ENCODE measurements at regions of chr2 and their contacts with region 1.

Region 1: DNA sequence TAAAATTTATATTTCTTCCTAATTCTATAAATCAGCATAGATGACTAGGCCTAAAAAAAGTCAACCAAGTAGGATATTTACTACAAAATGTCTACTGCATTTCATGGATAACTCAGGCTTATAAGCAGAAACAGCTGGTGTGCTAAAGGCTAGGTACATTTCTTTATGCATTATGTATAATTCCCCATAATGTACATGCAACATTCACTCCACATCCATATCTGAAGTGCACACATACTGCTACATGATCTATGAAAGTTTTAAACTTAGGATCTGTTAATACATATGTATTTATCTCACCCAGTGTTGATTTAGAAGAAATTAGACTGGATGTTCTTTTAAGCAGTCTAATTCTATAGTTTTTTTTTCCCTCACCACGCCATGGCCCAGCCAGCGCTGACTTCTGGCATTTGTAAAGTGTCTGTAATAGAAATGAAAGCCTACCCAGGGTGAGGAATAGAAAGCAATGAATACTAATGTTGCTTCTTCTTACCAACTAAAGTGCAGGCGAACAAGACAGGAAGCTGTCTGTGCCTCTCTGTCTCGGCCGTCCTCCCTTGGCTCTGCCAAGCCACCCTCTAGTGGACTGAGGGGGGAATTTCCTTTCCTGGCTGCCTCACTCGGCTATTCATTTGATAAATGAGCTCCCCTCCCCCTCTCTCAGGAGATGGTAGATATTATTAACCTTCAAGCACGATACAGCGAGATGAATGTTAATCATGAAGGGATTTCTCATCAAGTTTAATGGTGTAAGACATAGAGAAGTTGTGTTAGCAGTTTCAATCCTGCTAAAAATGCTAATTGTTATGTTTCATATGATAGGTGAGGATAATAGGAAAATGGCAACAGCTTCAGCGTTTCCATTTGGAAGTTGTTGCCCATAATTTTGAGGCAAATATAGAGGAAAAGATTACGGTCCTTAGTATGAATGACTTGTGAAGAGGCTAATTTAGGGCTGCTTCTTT is 384.5 kb downstream of the MTX2 start:
- DNase-seq: peak; percentile 81
- H3K4me3 Mint-ChIP-seq: no peak overlapping the region
- H3K27ac Mint-ChIP-seq: no peak overlapping the region
- H3K4me1 Mint-ChIP-seq: peaks cover 5% of the 10 kb centered on the region
- H3K27me3 Mint-ChIP-seq: peaks cover 29% of the 10 kb centered on the region
- CTCF ChIP-seq: peak; percentile 73

Region 2: DNA sequence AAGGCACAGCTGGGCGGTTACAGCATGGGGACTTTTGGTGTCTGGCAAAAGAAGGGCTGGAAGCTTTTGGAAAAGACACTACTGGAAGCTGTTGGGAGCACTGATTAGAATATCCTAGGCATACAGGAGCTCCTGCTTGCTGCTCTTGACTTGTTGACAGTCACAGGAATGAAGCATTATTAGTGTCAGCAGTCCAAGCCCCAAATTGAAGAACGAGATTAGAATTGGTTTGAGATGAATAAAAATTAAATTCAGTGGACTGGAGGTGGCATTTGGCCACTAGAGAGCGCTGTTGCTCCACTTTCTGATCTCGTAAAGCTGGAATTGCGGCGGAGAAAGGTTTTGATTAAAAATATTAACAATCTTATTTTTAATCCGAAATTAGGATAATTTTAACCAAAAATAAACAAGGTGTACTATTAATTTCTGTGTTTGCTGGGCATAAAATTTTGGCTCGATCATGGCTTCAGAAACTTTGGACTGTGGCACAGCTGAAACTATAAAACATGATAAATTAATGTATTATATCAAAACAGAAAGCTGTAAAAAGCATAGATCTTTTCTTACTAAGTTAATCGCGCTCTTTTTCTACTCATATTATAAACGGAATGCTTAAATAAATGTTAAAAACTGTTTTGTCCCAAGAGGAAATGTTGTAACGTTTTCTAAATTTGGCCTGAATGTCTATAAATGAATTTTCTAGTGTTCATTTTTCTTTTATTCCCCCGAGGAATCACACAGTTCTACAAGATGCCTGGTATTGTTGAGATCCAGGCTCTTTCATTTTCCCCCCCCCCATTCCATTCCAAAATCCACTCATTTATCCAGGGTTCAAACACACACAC is 526.6 kb before region 1 on chr2:
- CTCF ChIA-PET with region 1: interaction called, 100 read pairs
- POLR2A ChIA-PET with region 1: interaction called, 13 read pairs
- intact Hi-C with region 1: loop called (anchors 1 kb)
- DNase-seq: peak; percentile 63
- H3K4me3 Mint-ChIP-seq: no peak overlapping the region
- H3K27ac Mint-ChIP-seq: no peak overlapping the region
- H3K4me1 Mint-ChIP-seq: no peaks in the 10 kb centered on the region
- H3K27me3 Mint-ChIP-seq: peaks cover 11% of the 10 kb centered on the region
- CTCF ChIP-seq: peak; percentile 76

Region 3: GRCh38 chr2:176140513-176141317 is 513.0 kb before region 1 on chr2:
- CTCF ChIA-PET with region 1: interaction called, 84 read pairs
- POLR2A ChIA-PET with region 1: interaction called, 3 read pairs
- intact Hi-C with region 1: loop called (anchors 1 kb)
- DNase-seq: peak; percentile 73
- H3K4me3 Mint-ChIP-seq: peak overlapping the region; percentile 57
- H3K27ac Mint-ChIP-seq: no peak overlapping the region
- H3K4me1 Mint-ChIP-seq: no peaks in the 10 kb centered on the region
- H3K27me3 Mint-ChIP-seq: no peaks in the 10 kb centered on the region
- CTCF ChIP-seq: peak; percentile 96

Region 4: GRCh38 chr2:176638167-176639015 is 15.4 kb before region 1 on chr2:
- CTCF ChIA-PET with region 1: interaction called, 53 read pairs
- POLR2A ChIA-PET with region 1: interaction called, 5 read pairs
- intact Hi-C with region 1: no loop called
- DNase-seq: peak; percentile 61
- H3K4me3 Mint-ChIP-seq: peak overlapping the region; percentile 74
- H3K27ac Mint-ChIP-seq: no peak overlapping the region
- H3K4me1 Mint-ChIP-seq: peaks cover 6% of the 10 kb centered on the region
- H3K27me3 Mint-ChIP-seq: no peaks in the 10 kb centered on the region
- CTCF ChIP-seq: peak; percentile 85

Region 5: GRCh38 chr2:176664478-176664877 is 10.7 kb after region 1 on chr2:
- CTCF ChIA-PET with region 1: interaction called, 38 read pairs
- POLR2A ChIA-PET with region 1: interaction called, 5 read pairs
- intact Hi-C with region 1: no loop called
- DNase-seq: no peak
- H3K4me3 Mint-ChIP-seq: no peak overlapping the region
- H3K27ac Mint-ChIP-seq: no peak overlapping the region
- H3K4me1 Mint-ChIP-seq: peaks cover 5% of the 10 kb centered on the region
- H3K27me3 Mint-ChIP-seq: no peaks in the 10 kb centered on the region
- CTCF ChIP-seq: no peak

Region 6: DNA sequence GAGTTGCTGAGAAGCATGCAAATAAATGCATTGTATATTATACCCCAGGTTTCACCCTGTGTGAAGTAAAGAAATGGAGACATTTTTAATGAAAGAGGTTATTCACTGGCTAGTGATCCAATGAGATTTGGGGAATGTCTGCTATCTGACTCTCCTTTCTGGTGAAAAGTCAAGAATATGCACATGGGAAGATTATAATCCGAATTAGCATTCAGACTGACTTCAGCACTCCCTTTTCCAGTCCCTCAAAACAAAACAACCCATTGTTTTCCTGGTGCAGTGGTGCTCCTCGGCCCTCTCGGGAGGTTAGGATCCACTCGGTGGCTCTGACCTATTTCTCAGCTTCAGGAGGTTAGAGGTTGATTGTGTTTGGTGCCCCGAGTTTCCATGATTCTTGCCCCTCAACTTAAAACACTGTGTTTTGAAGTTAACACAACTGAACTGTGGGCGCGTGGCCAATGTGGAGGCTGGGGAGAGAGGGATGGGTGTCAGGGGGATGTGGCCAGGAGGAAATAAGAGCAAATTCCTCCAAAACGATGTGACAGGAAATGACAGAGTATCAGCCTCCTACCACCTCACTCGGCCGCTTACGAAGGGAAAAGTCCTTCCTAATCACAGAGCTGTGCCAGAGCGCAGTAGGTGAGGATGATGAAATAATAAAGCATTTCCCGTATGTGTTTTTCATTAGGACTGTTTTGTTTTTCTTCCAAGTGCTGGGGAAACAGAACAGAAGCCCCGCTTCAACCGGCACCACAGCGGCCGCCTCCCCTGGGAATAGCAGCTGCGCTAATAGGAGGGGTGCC is 55.6 kb after region 1 on chr2:
- CTCF ChIA-PET with region 1: interaction called, 10 read pairs
- POLR2A ChIA-PET with region 1: no interaction called
- intact Hi-C with region 1: no loop called
- DNase-seq: no peak
- H3K4me3 Mint-ChIP-seq: no peak overlapping the region
- H3K27ac Mint-ChIP-seq: no peak overlapping the region
- H3K4me1 Mint-ChIP-seq: no peaks in the 10 kb centered on the region
- H3K27me3 Mint-ChIP-seq: peaks cover 49% of the 10 kb centered on the region
- CTCF ChIP-seq: no peak

Region 7: GRCh38 chr2:176834226-176834625 is 180.5 kb after region 1 on chr2:
- CTCF ChIA-PET with region 1: no interaction called
- POLR2A ChIA-PET with region 1: no interaction called
- intact Hi-C with region 1: no loop called
- DNase-seq: no peak
- H3K4me3 Mint-ChIP-seq: no peak overlapping the region
- H3K27ac Mint-ChIP-seq: no peak overlapping the region
- H3K4me1 Mint-ChIP-seq: no peaks in the 10 kb centered on the region
- H3K27me3 Mint-ChIP-seq: peaks cover 58% of the 10 kb centered on the region
- CTCF ChIP-seq: no peak

Region 8: GRCh38 chr2:177148477-177149154 is 494.9 kb after region 1 on chr2:
- CTCF ChIA-PET with region 1: interaction called, 24 read pairs
- POLR2A ChIA-PET with region 1: interaction called, 3 read pairs
- intact Hi-C with region 1: loop called (anchors 1 kb)
- DNase-seq: peak; percentile 84
- H3K4me3 Mint-ChIP-seq: peak overlapping the region; percentile 70
- H3K27ac Mint-ChIP-seq: no peak overlapping the region
- H3K4me1 Mint-ChIP-seq: peaks cover 15% of the 10 kb centered on the region
- H3K27me3 Mint-ChIP-seq: peaks cover 66% of the 10 kb centered on the region
- CTCF ChIP-seq: peak; percentile 70

Region 9: DNA sequence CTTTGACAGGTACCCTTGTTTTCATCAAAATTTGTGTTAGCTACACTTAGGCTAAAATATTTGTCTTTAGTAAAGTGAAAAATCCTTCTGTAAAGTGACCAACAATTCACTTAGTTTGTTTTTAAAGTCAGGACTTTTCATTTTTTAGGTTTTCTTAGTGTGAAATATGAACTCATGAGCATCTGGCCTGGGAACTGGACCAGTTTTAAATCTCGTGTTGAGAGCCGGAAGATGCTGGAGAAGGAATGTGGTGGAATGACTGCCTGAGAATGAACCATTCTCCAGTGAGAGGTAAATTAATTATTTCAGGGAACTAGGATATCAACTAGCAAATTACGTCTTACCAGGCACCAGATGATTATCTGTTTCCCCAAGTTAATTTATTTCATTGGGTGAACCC is 1044.5 kb after region 1 on chr2:
- CTCF ChIA-PET with region 1: no interaction called
- POLR2A ChIA-PET with region 1: no interaction called
- intact Hi-C with region 1: no loop called
- DNase-seq: no peak
- H3K4me3 Mint-ChIP-seq: no peak overlapping the region
- H3K27ac Mint-ChIP-seq: no peak overlapping the region
- H3K4me1 Mint-ChIP-seq: no peaks in the 10 kb centered on the region
- H3K27me3 Mint-ChIP-seq: peaks cover under 1% of the 10 kb centered on the region
- CTCF ChIP-seq: no peak